ENCODE measurements at regions of chr5 and their contacts with region 1.

Region 1: DNA sequence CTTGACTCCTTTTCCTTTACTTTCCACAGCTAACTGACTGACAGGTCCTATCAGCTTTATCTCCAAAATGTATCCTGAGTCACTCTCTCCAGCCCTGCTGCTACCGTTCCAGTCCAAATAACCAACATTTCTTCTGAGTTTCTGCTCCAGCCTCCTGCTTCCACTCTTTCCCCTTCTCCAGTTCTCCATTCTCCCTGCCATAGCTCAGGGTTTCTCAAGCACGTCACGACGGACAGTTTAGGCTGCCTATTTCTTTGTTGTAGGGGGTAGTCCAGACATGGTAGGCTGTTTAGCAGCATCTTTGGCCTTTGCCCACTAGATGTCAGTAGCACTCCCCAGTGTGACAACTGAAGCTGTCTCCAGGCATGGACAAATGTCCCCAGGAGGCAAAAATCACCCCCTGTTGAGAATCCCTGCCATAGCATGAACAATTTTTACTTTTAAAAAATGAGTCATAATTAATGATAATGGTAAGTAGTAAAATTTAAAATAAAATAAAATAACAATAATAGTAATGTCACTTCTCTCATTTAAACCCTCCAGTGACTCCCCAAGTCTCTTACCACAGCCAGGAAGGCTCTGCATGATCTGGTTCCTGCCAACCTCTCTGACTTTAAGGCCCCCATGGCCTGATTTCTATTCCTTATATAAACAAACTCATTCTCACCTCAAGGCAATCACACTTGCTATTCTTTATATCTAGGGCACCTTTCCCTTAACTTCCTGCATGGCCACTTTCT is 105.4 kb upstream of the FER start:
- DNase-seq: peak; percentile 83
- H3K4me3 Mint-ChIP-seq: peak overlapping the region; percentile 5
- H3K27ac Mint-ChIP-seq: no peak overlapping the region
- H3K4me1 Mint-ChIP-seq: peaks cover 6% of the 10 kb centered on the region
- H3K27me3 Mint-ChIP-seq: no peaks in the 10 kb centered on the region
- CTCF ChIP-seq: peak; percentile 77

Region 2: GRCh38 chr5:108560581-108560980 is 81.8 kb before region 1 on chr5:
- CTCF ChIA-PET with region 1: no interaction called
- POLR2A ChIA-PET with region 1: no interaction called
- intact Hi-C with region 1: no loop called
- DNase-seq: peak; percentile 4
- H3K4me3 Mint-ChIP-seq: no peak overlapping the region
- H3K27ac Mint-ChIP-seq: no peak overlapping the region
- H3K4me1 Mint-ChIP-seq: no peaks in the 10 kb centered on the region
- H3K27me3 Mint-ChIP-seq: no peaks in the 10 kb centered on the region
- CTCF ChIP-seq: no peak

Region 3: DNA sequence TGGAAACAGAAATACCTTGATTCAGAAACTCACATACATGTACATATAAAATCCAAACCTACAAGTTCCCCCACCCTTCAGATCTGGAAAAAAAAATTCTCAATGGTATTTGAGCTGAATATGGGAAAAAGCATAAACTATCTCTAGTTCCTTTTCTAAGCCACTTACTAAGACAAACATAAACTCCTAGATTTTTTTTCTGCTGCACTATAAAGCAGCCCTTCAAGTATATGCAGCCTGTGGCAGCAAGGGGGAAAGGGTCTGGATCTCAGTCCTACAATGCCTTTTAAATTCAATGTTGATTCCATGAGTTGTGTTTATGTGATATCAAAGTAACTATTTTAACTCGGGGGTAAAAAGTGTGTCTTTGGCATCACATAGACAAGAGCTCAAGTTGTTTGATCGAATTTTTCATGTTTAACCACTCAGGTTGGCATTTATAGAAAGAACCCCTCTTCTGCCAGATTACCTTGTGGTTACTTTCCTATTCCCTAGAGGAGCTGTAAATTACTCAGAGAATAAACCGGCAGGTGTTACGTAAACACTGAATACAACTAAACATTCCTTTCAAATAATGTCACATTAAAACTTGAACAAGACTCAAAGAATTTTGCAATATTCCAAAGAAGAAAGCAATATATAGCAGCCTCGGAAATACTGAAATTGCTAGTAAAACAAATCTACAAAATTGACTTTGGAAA is 13.6 kb after region 1 on chr5:
- CTCF ChIA-PET with region 1: interaction called, 16 read pairs
- POLR2A ChIA-PET with region 1: interaction called, 6 read pairs
- intact Hi-C with region 1: no loop called
- DNase-seq: peak; percentile 85
- H3K4me3 Mint-ChIP-seq: peak overlapping the region; percentile 28
- H3K27ac Mint-ChIP-seq: no peak overlapping the region
- H3K4me1 Mint-ChIP-seq: peaks cover 21% of the 10 kb centered on the region
- H3K27me3 Mint-ChIP-seq: no peaks in the 10 kb centered on the region
- CTCF ChIP-seq: no peak

Region 4: GRCh38 chr5:108681079-108681921 is 39.0 kb after region 1 on chr5:
- CTCF ChIA-PET with region 1: interaction called, 5 read pairs
- POLR2A ChIA-PET with region 1: interaction called, 4 read pairs
- intact Hi-C with region 1: loop called (anchors 1 kb)
- DNase-seq: peak; percentile 73
- H3K4me3 Mint-ChIP-seq: no peak overlapping the region
- H3K27ac Mint-ChIP-seq: no peak overlapping the region
- H3K4me1 Mint-ChIP-seq: no peaks in the 10 kb centered on the region
- H3K27me3 Mint-ChIP-seq: peaks cover 16% of the 10 kb centered on the region
- CTCF ChIP-seq: peak; percentile 69

Region 5: GRCh38 chr5:109439590-109439989 is 797.3 kb after region 1 on chr5:
- CTCF ChIA-PET with region 1: interaction called, 3 read pairs
- POLR2A ChIA-PET with region 1: no interaction called
- intact Hi-C with region 1: loop called (anchors 2 kb)
- DNase-seq: no peak
- H3K4me3 Mint-ChIP-seq: no peak overlapping the region
- H3K27ac Mint-ChIP-seq: no peak overlapping the region
- H3K4me1 Mint-ChIP-seq: no peaks in the 10 kb centered on the region
- H3K27me3 Mint-ChIP-seq: no peaks in the 10 kb centered on the region
- CTCF ChIP-seq: no peak